ENCODE measurements at regions of chr3 and their contacts with region 1.

Region 1: DNA sequence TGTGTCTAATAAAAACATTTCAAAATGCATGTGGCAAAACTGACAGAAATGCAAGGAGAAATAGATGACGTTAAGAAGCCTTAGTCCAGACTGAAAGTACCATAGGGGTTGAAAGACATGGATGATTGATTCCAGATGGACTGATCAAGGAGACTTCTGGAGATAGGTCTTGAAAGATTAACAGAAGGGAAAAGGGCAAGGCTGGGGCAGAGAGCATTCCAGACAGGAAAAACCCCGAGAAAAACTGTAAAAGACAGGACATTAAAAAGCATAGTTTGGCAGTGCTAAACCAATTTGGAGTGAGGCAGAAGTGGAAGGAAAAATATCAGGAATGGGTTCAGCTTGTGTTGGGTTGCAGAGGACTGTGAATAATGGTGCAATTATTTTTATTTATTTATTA is 375.2 kb upstream of the SGO1 start:
- DNase-seq: no peak
- H3K4me3 ChIP-seq: no peak overlapping the region
- H3K4me3 Mint-ChIP-seq: no peak overlapping the region
- H3K27ac Mint-ChIP-seq: no peak overlapping the region
- H3K4me1 ChIP-seq: no peaks in the 10 kb centered on the region
- H3K4me1 Mint-ChIP-seq: no peaks in the 10 kb centered on the region
- H3K27me3 ChIP-seq: no peaks in the 10 kb centered on the region
- H3K27me3 Mint-ChIP-seq: no peaks in the 10 kb centered on the region
- CTCF ChIP-seq: no peak

Region 2: GRCh38 chr3:20589275-20589674 is 28.1 kb after region 1 on chr3:
- CTCF ChIA-PET with region 1: no interaction called
- POLR2A ChIA-PET with region 1: no interaction called
- intact Hi-C with region 1: loop called (anchors 2 kb)
- DNase-seq: no peak
- H3K4me3 ChIP-seq: no peak overlapping the region
- H3K4me3 Mint-ChIP-seq: no peak overlapping the region
- H3K27ac Mint-ChIP-seq: no peak overlapping the region
- H3K4me1 ChIP-seq: no peaks in the 10 kb centered on the region
- H3K4me1 Mint-ChIP-seq: no peaks in the 10 kb centered on the region
- H3K27me3 ChIP-seq: no peaks in the 10 kb centered on the region
- H3K27me3 Mint-ChIP-seq: no peaks in the 10 kb centered on the region
- CTCF ChIP-seq: no peak

Region 3: GRCh38 chr3:21752749-21753347 is 1191.7 kb after region 1 on chr3:
- CTCF ChIA-PET with region 1: no interaction called
- POLR2A ChIA-PET with region 1: no interaction called
- intact Hi-C with region 1: no loop called
- DNase-seq: peak in 1 of 2 experiments; percentile 5
- H3K4me3 ChIP-seq: no peak overlapping the region
- H3K4me3 Mint-ChIP-seq: no peak overlapping the region
- H3K27ac Mint-ChIP-seq: no peak overlapping the region
- H3K4me1 ChIP-seq: no peaks in the 10 kb centered on the region
- H3K4me1 Mint-ChIP-seq: no peaks in the 10 kb centered on the region
- H3K27me3 ChIP-seq: no peaks in the 10 kb centered on the region
- H3K27me3 Mint-ChIP-seq: peaks cover 6% of the 10 kb centered on the region
- CTCF ChIP-seq: peak; percentile 19 to 39